Naive thymus-derived CD4-positive, alpha-beta T cell (primary cell): ENCODE measurements at regions of chr3 and their contacts with region 1.

Region 1: DNA sequence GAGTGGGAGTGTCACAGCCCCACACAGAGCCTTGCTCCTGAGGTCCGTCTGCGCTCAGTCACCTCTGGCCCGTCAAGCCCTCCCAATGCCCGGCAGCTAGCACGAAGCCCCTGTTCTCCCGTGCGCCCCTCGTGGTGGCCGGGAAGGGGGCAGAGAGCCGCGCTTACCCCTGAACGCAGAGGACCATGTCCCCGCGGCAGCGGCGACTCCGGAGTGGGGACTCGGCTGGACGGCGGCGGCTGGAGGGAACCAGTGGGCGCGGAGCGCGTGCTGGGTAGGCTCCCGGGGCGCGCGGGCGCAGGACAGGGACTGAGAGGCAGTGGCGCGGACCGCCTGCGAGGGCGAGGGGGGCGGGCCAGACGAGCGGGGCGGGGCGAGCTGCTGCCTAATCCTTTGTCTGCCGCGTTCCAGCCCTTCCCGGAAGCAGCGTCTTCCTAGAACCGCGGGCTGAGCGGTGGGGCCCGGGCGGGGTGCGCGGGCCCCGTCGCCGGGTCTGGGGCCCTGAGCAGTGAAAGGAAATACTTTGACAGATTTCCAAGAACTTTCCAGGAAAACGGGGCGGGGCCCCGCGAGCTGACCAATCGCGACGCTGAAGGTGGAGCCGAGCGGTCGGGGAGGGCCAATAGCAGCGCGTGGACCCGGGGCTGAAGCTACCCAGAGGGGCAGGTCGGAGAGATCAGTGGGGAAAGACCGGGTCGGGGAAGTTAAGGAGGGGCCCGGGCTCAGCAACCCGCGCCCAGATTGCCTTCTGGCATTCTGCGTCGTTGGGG is at the start of gene CISH:
- DNase-seq: peak; percentile 86 to 98 (median 89)
- ATAC-seq: peak; percentile 77
- H3K4me3 ChIP-seq: peak within 1 kb of the TSS; percentile 93
- H3K4me3 Mint-ChIP-seq: peak within 1 kb of the TSS; percentile 83 to 98 (median 92)
- H3K27ac ChIP-seq: peak within 1 kb of the TSS; percentile 93
- H3K27ac Mint-ChIP-seq: peak within 1 kb of the TSS; percentile 89 to 96 (median 94)
- H3K4me1 ChIP-seq: peaks cover 55 to 56% of the 10 kb centered on the region in 2 donors
- H3K4me1 Mint-ChIP-seq: peaks cover 53 to 80% (median 64%) of the 10 kb centered on the region in 7 donors
- H3K27me3 ChIP-seq: no peaks in the 10 kb centered on the region
- H3K27me3 Mint-ChIP-seq: peaks cover 0 to 2% (median 0%) of the 10 kb centered on the region in 5 donors
- total RNA-seq, gene CISH: 10.9 to 486 (median 28.5) TPM

Region 2: GRCh38 chr3:50235716-50236496 is 375.7 kb before region 1 on chr3 and contains the start of gene GNAI2:
- CTCF ChIA-PET with region 1: no interaction called
- POLR2A ChIA-PET with region 1: no interaction called
- intact Hi-C with region 1: loop called in 1 of 2 experiments (anchors 5 kb)
- DNase-seq: peak; percentile 95 to 99 (median 99)
- ATAC-seq: peak; percentile 93
- H3K4me3 ChIP-seq: peak within 1 kb of the TSS; percentile 90
- H3K4me3 Mint-ChIP-seq: peak within 1 kb of the TSS; percentile 92 to 99 (median 98)
- H3K27ac ChIP-seq: peak within 1 kb of the TSS; percentile 84
- H3K27ac Mint-ChIP-seq: peak within 1 kb of the TSS; percentile 87 to 97 (median 95)
- H3K4me1 ChIP-seq: peaks cover 30 to 35% of the 10 kb centered on the region in 2 donors
- H3K4me1 Mint-ChIP-seq: peaks cover 12 to 41% (median 37%) of the 10 kb centered on the region in 7 donors
- H3K27me3 ChIP-seq: no peaks in the 10 kb centered on the region
- H3K27me3 Mint-ChIP-seq: no peaks in the 10 kb centered on the region
- total RNA-seq, gene GNAI2: 225 to 442 (median 282) TPM

Region 3: DNA sequence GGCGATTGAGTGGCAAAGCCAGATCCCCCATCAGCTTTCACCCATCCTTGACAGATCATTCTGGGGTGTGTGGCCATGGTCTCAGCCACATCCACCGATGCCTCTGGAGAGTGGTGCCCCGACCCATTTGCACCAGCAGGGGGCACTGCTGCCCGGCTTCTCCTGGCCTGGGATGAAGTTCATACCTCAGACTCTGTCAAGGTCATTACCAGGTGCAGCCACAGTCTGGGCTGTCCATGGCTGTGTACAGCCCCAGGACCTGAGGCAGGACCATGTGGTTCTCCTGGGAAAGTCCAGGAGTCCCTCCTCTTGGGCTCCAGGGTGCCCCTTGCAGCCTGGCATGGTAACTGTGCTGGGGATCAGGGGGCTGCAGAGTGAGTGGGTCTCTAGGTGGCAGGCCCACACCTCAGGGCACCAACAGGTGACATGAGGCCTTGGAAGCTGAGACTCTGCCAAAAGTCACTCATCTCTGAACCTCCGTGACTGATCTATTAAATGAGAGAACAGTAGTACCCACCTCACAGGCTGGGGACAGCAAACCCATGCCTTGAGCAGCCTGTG is 175.5 kb before region 1 on chr3:
- CTCF ChIA-PET with region 1: no interaction called
- POLR2A ChIA-PET with region 1: no interaction called
- intact Hi-C with region 1: loop called in 1 of 2 experiments (anchors 1 kb)
- DNase-seq: peak; percentile 48 to 81 (median 68)
- ATAC-seq: peak; percentile 92
- H3K4me3 ChIP-seq: no peak overlapping the region
- H3K4me3 Mint-ChIP-seq: no peak overlapping the region
- H3K27ac ChIP-seq: no peak overlapping the region
- H3K27ac Mint-ChIP-seq: no peak overlapping the region
- H3K4me1 ChIP-seq: no peaks in the 10 kb centered on the region
- H3K4me1 Mint-ChIP-seq: peaks cover 0 to 20% (median 4%) of the 10 kb centered on the region in 7 donors
- H3K27me3 ChIP-seq: no peaks in the 10 kb centered on the region
- H3K27me3 Mint-ChIP-seq: peaks cover 0 to 10% (median 0%) of the 10 kb centered on the region in 5 donors

Region 4: GRCh38 chr3:50587806-50588758 is 23.6 kb before region 1 on chr3:
- CTCF ChIA-PET with region 1: interaction called, 578 read pairs
- POLR2A ChIA-PET with region 1: interaction called, 730 read pairs
- intact Hi-C with region 1: loop called (anchors 1 kb)
- DNase-seq: peak in 1 of 9 donors; percentile 80
- ATAC-seq: peak; percentile 62
- H3K4me3 ChIP-seq: no peak overlapping the region
- H3K4me3 Mint-ChIP-seq: peak overlapping the region; percentile 25 to 69 (median 58)
- H3K27ac ChIP-seq: peak overlapping the region; percentile 62
- H3K27ac Mint-ChIP-seq: peak overlapping the region; percentile 67 to 95 (median 83)
- H3K4me1 ChIP-seq: peaks cover 42 to 55% of the 10 kb centered on the region in 2 donors
- H3K4me1 Mint-ChIP-seq: peaks cover 30 to 88% (median 60%) of the 10 kb centered on the region in 7 donors
- H3K27me3 ChIP-seq: no peaks in the 10 kb centered on the region
- H3K27me3 Mint-ChIP-seq: no peaks in the 10 kb centered on the region

Region 5: GRCh38 chr3:50971487-50971924 is 359.9 kb after region 1 on chr3:
- CTCF ChIA-PET with region 1: interaction called, 12 read pairs
- POLR2A ChIA-PET with region 1: interaction called, 3 read pairs
- intact Hi-C with region 1: loop called (anchors 1 to 2 kb)
- DNase-seq: peak in 8 of 9 donors; percentile 37 to 83 (median 78)
- ATAC-seq: peak; percentile 99
- H3K4me3 ChIP-seq: no peak overlapping the region
- H3K4me3 Mint-ChIP-seq: peak overlapping the region in 2 of 10 donors; percentile 15 to 45
- H3K27ac ChIP-seq: no peak overlapping the region
- H3K27ac Mint-ChIP-seq: peak overlapping the region in 7 of 9 donors; percentile 12 to 77 (median 67)
- H3K4me1 ChIP-seq: peaks cover 9 to 14% of the 10 kb centered on the region in 2 donors
- H3K4me1 Mint-ChIP-seq: peaks cover 0 to 21% (median 13%) of the 10 kb centered on the region in 7 donors
- H3K27me3 ChIP-seq: no peaks in the 10 kb centered on the region
- H3K27me3 Mint-ChIP-seq: peaks cover 0 to 3% (median 0%) of the 10 kb centered on the region in 5 donors

Region 6: DNA sequence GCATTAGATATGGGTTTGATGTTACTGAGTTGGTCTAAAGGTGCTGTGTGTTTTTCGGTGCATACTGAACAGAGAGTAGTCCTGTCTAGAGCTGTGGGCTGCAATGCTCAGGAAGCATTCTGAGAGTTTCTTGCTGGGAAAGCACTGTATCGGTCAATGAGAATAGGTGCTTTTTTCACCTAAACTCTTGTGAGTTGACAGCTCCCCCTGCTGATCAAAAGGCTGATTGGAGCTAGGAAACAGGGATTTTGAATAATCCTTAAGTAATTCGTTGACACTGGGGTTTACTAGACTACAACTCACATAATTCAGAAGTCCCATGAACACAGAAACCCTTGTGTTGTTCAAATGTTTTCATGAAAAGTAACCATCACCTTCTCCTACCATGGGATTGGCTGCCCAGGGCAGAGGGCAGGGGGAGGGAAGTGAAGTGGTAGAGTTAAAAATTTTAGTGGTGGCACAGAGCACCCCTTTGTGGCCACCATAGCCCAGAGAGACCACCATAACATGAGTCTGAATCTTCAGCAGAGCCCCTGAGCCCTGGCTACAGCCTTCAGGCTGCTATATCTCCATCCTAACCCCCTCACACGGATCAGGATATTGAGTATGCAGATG is 760.4 kb after region 1 on chr3:
- CTCF ChIA-PET with region 1: interaction called, 12 read pairs
- POLR2A ChIA-PET with region 1: interaction called, 10 read pairs
- intact Hi-C with region 1: loop called (anchors 1 kb)
- DNase-seq: peak in 8 of 9 donors; percentile 22 to 66 (median 49)
- ATAC-seq: peak; percentile 50
- H3K4me3 ChIP-seq: no peak overlapping the region
- H3K4me3 Mint-ChIP-seq: no peak overlapping the region
- H3K27ac ChIP-seq: no peak overlapping the region
- H3K27ac Mint-ChIP-seq: no peak overlapping the region
- H3K4me1 ChIP-seq: no peaks in the 10 kb centered on the region
- H3K4me1 Mint-ChIP-seq: peaks cover 0 to 7% (median 5%) of the 10 kb centered on the region in 7 donors
- H3K27me3 ChIP-seq: no peaks in the 10 kb centered on the region
- H3K27me3 Mint-ChIP-seq: peaks cover 0 to 4% (median 3%) of the 10 kb centered on the region in 5 donors

Region 7: DNA sequence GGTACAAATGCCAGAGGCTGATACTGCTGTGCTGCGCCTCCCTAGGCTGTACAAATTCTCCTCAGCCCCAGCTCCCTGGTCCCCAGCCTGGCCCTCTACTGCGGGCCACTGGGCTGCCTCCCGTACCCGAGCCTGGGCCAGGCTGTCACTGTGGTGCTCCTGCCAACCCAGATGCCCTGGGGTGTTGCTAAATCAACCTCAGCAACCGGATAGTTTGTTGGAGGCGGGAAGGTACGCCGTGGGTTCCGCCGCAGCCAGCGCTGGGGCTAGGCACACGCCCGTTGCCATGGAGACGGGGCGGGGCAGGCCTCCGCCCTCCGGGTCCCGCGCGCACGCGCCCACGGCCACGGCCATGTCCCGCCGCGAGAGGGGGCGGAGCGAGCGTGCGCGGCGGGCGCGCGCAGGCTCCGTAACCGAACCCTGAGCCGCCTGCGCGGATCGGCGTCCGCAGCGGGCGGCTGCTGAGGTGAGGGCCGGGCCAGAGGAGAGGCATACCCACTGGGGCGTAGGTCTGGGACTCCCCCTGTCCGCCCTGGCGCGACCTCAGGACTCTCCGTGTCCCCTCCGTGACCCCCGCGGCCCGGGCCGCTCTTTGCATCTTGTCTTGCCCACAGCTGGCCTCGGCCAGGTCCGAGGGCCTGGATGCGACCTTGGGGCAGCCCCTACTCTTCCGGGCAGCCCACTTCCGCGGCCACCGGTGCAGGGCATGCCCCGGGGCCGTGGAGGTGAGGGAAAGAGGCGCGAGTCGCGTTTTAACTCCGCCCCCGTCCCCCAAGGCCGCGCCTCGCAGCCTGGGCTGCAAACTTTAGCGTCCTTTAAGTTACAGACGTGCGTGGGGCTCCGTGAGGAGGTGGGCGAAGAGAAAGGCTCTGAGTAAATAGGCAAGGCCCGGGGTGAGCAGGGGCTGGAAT is 1059.4 kb after region 1 on chr3 and contains the start of gene TEX264:
- CTCF ChIA-PET with region 1: no interaction called
- POLR2A ChIA-PET with region 1: interaction called, 4 read pairs
- intact Hi-C with region 1: loop called (anchors 1 to 2 kb)
- DNase-seq: peak; percentile 90 to 98 (median 95)
- ATAC-seq: peak; percentile 90
- H3K4me3 ChIP-seq: peak within 1 kb of the TSS; percentile 94
- H3K4me3 Mint-ChIP-seq: peak within 1 kb of the TSS; percentile 89 to 95 (median 92)
- H3K27ac ChIP-seq: peak within 1 kb of the TSS; percentile 85
- H3K27ac Mint-ChIP-seq: peak within 1 kb of the TSS; percentile 24 to 97 (median 93)
- H3K4me1 ChIP-seq: peaks cover 53 to 60% of the 10 kb centered on the region in 2 donors
- H3K4me1 Mint-ChIP-seq: peaks cover 59 to 82% (median 73%) of the 10 kb centered on the region in 7 donors
- H3K27me3 ChIP-seq: no peaks in the 10 kb centered on the region
- H3K27me3 Mint-ChIP-seq: no peaks in the 10 kb centered on the region
- total RNA-seq, gene TEX264: 34.4 to 65.0 (median 41.7) TPM